Transverse colon (tissue), 4 donors: ENCODE measurements at regions of chr2 and their contacts with region 1.

Region 1: GRCh38 chr2:70142590-70143313 is 48.1 kb downstream of the C2orf42 start:
- DNase-seq: peak; percentile 100
- H3K4me3 ChIP-seq: peak overlapping the region in 3 of 4 donors; percentile 36 to 74 (median 61)
- H3K27ac ChIP-seq: peak overlapping the region; percentile 94 to 98 (median 97)
- H3K4me1 ChIP-seq: peaks cover 8 to 20% (median 19%) of the 10 kb centered on the region in 4 donors
- H3K27me3 ChIP-seq: no peaks in the 10 kb centered on the region
- CTCF ChIP-seq: peak; percentile 85 to 100 (median 95)
- EP300 ChIP-seq: peak; percentile 87
- POLR2A ChIP-seq: peak; percentile 62

Region 2: GRCh38 chr2:69902213-69902922 is 240.4 kb before region 1 on chr2:
- in situ Hi-C with region 1: loop called in 2 of 4 experiments (anchors 10 kb)
- intact Hi-C with region 1: no loop called
- DNase-seq: peak; percentile 24
- H3K4me3 ChIP-seq: peak overlapping the region in 1 of 4 donors; percentile 13
- H3K27ac ChIP-seq: peak overlapping the region; percentile 9 to 41 (median 30)
- H3K4me1 ChIP-seq: peaks cover 0 to 11% (median 2%) of the 10 kb centered on the region in 4 donors
- H3K27me3 ChIP-seq: no peaks in the 10 kb centered on the region
- CTCF ChIP-seq: no peak
- EP300 ChIP-seq: no peak
- POLR2A ChIP-seq: no peak

Region 3: DNA sequence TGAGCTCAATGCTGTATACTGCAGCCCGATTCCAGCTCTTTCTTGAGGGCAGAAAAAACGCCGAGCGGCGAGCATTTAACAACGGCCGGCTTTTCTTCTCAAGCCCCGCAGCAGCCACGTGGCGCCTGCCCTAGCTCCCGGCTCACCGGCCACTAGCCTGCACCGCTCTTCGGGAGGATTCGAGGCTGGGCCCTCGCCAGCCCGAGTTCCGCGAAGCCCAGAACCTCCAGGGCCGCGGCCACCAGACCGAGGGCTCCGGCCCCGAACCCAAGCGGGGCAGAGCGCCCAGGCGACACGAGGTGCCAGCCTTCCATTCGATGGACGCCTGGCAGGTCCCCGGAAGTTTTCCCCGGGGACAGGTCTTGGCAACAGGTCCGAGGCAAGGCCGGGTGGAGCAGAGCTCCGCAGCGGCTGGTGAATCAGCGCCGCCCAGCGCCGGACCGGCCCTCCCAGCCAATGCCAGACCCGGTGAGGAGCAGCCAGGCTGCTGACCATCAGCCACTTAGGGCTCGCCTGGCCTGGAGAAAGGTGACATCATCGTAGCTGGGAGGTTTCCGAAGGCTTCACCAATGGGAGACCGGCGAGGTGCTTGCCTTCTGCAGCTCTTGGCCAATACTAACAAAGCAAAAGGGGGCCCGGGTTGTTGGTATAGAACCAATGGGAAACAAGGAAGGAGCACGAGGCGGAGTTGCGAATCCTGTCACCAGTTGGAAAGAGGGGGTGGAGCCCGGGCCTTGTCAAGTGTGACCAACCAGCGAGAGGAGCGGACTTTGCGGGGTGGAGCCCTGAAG is 228.4 kb before region 1 on chr2:
- in situ Hi-C with region 1: loop called (anchors 5 to 10 kb)
- intact Hi-C with region 1: loop called (anchors 2 kb)
- DNase-seq: peak; percentile 100
- H3K4me3 ChIP-seq: peak overlapping the region; percentile 38 to 92 (median 82)
- H3K27ac ChIP-seq: peak overlapping the region; percentile 94 to 99 (median 98)
- H3K4me1 ChIP-seq: peaks cover 13 to 49% (median 21%) of the 10 kb centered on the region in 4 donors
- H3K27me3 ChIP-seq: no peaks in the 10 kb centered on the region
- CTCF ChIP-seq: peak in 3 of 5 experiments; percentile 15 to 46 (median 17)
- EP300 ChIP-seq: no peak
- POLR2A ChIP-seq: peak; percentile 71

Region 4: DNA sequence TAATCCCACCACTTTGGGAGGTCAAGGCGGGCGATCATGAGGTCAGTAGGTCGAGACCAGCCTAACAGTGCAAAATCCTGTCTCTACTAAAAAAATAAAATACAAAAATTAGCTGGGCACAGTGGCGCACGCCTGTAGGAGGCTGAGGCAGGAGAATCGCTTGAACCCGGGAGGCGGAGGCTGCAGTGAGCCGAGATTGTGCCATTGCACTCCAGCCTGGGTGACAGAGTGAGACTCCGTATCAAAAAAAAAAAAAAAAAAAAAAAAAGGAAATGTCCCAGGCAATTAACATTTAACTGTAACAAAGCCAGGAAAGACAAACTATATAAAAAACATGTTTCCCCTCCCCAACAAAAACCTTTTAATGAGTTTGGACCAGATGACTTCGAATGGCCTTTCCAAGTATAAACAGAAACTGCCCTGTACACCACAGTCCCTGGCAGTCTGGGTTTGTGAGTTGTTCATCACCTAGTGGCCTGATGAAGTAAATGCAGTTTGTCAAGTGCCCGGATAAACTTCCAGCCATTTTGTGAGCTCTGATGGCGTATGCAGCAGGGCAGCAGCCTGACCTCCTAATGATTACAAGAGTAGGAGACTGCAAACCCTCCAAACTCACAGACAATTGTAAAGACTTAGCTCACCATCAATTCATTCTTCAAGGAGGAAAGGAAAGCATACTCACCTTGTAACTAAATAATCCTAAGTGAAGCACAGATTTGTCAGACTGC is 72.0 kb before region 1 on chr2:
- in situ Hi-C with region 1: loop called in 1 of 4 experiments (anchors 10 kb)
- intact Hi-C with region 1: no loop called
- DNase-seq: peak; percentile 71
- H3K4me3 ChIP-seq: no peak overlapping the region
- H3K27ac ChIP-seq: peak overlapping the region; percentile 73 to 88 (median 84)
- H3K4me1 ChIP-seq: peaks cover 0 to 39% (median 23%) of the 10 kb centered on the region in 4 donors
- H3K27me3 ChIP-seq: no peaks in the 10 kb centered on the region
- CTCF ChIP-seq: peak; percentile 76 to 97 (median 81)
- EP300 ChIP-seq: no peak
- POLR2A ChIP-seq: no peak

Region 5: GRCh38 chr2:70086838-70087701 is 55.7 kb before region 1 on chr2 and contains the start of gene PCBP1:
- in situ Hi-C with region 1: loop called in 1 of 4 experiments (anchors 10 kb)
- intact Hi-C with region 1: loop called (anchors 1 kb)
- DNase-seq: peak; percentile 97
- H3K4me3 ChIP-seq: peak within 1 kb of the TSS; percentile 74 to 88 (median 80)
- H3K27ac ChIP-seq: peak within 1 kb of the TSS; percentile 97 to 100 (median 98)
- H3K4me1 ChIP-seq: peaks cover 28 to 58% (median 43%) of the 10 kb centered on the region in 4 donors
- H3K27me3 ChIP-seq: no peaks in the 10 kb centered on the region
- CTCF ChIP-seq: no peak
- EP300 ChIP-seq: no peak
- POLR2A ChIP-seq: peak; percentile 91
- total RNA-seq, gene PCBP1: 103 to 189 (median 149) TPM